Ascending aorta (tissue), 2 donors: ENCODE measurements at regions of chr14 and their contacts with region 1.

Region 1: GRCh38 chr14:68911594-68912227 is 67.4 kb downstream of the ACTN1 start:
- DNase-seq: peak in 1 of 2 donors; percentile 86
- H3K4me3 ChIP-seq: no peak overlapping the region
- H3K27ac ChIP-seq: peak overlapping the region; percentile 56 to 59
- H3K4me1 ChIP-seq: peaks cover 11 to 54% of the 10 kb centered on the region in 2 donors
- H3K27me3 ChIP-seq: no peaks in the 10 kb centered on the region
- CTCF ChIP-seq: peak; percentile 95 to 96 (median 96)

Region 2: GRCh38 chr14:69038455-69039287 is 127.0 kb after region 1 on chr14:
- intact Hi-C with region 1: loop called (anchors 5 kb)
- DNase-seq: no peak
- H3K4me3 ChIP-seq: no peak overlapping the region
- H3K27ac ChIP-seq: peak overlapping the region; percentile 92 to 95
- H3K4me1 ChIP-seq: peaks cover 18 to 64% of the 10 kb centered on the region in 2 donors
- H3K27me3 ChIP-seq: no peaks in the 10 kb centered on the region
- CTCF ChIP-seq: no peak

Region 3: GRCh38 chr14:69101331-69101826 is 189.7 kb after region 1 on chr14:
- intact Hi-C with region 1: loop called (anchors 5 kb)
- DNase-seq: no peak
- H3K4me3 ChIP-seq: no peak overlapping the region
- H3K27ac ChIP-seq: no peak overlapping the region
- H3K4me1 ChIP-seq: peaks cover 0 to 12% of the 10 kb centered on the region in 2 donors
- H3K27me3 ChIP-seq: no peaks in the 10 kb centered on the region
- CTCF ChIP-seq: peak; percentile 55 to 67 (median 61)